Breast epithelium (tissue), 4 donors: ENCODE measurements at regions of chr5 and their contacts with region 1.

Region 1: GRCh38 chr5:145178641-145179523 is 656.3 kb downstream of the PRELID2 start:
- DNase-seq: no peak
- H3K4me3 ChIP-seq: no peak overlapping the region
- H3K27ac ChIP-seq: no peak overlapping the region
- H3K4me1 ChIP-seq: no peaks in the 10 kb centered on the region
- H3K27me3 ChIP-seq: no peaks in the 10 kb centered on the region
- CTCF ChIP-seq: no peak
- POLR2A ChIP-seq: no peak

Region 2: DNA sequence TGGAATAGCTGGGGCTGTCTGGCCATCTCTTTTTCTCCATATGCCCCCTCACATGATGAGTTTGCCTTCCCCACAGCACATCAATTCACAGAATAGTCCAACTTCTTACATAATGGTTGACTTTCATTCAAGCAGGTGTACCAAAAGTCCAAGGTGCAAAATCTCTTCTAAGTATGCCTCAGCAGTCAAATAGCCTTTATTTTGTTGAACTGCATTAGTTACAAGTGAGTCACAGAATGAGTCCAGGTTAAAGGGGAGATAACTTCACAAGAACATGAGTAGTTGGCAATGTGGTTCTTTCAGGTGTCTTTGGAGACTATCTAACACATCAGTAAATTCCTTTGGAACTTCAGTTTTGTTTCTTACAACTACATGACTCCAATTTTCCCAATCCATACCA is 16.3 kb before region 1 on chr5:
- intact Hi-C with region 1: loop called (anchors 1 kb)
- DNase-seq: no peak
- H3K4me3 ChIP-seq: no peak overlapping the region
- H3K27ac ChIP-seq: no peak overlapping the region
- H3K4me1 ChIP-seq: no peaks in the 10 kb centered on the region
- H3K27me3 ChIP-seq: no peaks in the 10 kb centered on the region
- CTCF ChIP-seq: no peak
- POLR2A ChIP-seq: no peak